ENCODE measurements at regions of chr10 and their contacts with region 1.

Region 1: DNA sequence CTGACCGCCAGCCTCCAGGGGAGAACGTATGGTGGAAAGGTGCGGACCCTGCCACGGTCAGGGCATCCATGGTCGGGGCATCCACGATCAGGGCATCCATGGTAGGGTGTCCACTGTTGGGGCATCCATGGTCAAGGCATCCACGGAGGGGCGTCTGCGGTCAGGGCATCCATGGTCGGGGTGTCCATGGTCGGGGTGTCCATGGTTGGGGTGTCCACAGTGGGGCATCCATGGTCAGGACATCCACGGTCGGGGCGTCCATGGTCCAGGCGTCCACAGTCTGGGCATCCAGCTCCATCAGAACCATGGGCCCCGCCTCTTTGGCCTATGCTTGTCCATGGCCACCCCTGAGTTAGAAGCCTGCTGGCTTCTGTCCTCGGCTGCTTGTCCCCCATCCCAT is 148.1 kb downstream of the ADARB2 start:
- DNase-seq: no peak
- ATAC-seq: no peak
- H3K4me3 ChIP-seq: no peak overlapping the region
- H3K27ac ChIP-seq: no peak overlapping the region
- H3K4me1 ChIP-seq: no peaks in the 10 kb centered on the region
- H3K27me3 ChIP-seq: peaks cover 0 to 12% (median 0%) of the 10 kb centered on the region in 7 donors
- CTCF ChIP-seq: no peak

Region 2: DNA sequence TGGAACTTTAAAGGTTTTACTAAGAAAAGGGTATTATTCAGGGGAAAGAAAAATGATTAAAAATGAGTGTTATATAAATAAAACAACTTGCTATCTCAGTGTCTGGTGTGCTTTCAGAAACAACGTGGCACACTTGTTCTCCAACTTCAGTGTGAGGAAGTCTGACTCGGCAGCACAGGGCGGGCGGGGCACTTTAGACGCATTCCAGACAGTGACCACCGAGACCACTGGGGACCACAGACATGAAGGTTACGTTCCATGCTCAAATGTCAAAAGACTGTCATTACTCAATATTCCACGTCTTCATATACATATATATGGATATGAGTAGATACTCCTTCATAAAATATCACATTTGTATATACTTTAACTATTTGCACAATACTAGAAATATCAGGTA is 744.7 kb before region 1 on chr10:
- intact Hi-C with region 1: loop called in 1 of 10 experiments (anchors 5 kb)
- DNase-seq: no peak
- ATAC-seq: peak in 2 of 8 donors; percentile 37 to 50
- H3K4me3 ChIP-seq: no peak overlapping the region
- H3K27ac ChIP-seq: no peak overlapping the region
- H3K4me1 ChIP-seq: peaks cover 0 to 41% (median 20%) of the 10 kb centered on the region in 9 donors
- H3K27me3 ChIP-seq: no peaks in the 10 kb centered on the region
- CTCF ChIP-seq: no peak

Region 3: GRCh38 chr10:1187151-1187854 is 402.0 kb before region 1 on chr10:
- intact Hi-C with region 1: no loop called
- DNase-seq: no peak
- ATAC-seq: no peak
- H3K4me3 ChIP-seq: no peak overlapping the region
- H3K27ac ChIP-seq: no peak overlapping the region
- H3K4me1 ChIP-seq: no peaks in the 10 kb centered on the region
- H3K27me3 ChIP-seq: peaks cover 0 to 51% (median 21%) of the 10 kb centered on the region in 7 donors
- CTCF ChIP-seq: no peak

Region 4: GRCh38 chr10:1661859-1662437 is 72.7 kb after region 1 on chr10:
- intact Hi-C with region 1: no loop called
- DNase-seq: no peak
- ATAC-seq: no peak
- H3K4me3 ChIP-seq: no peak overlapping the region
- H3K27ac ChIP-seq: no peak overlapping the region
- H3K4me1 ChIP-seq: no peaks in the 10 kb centered on the region
- H3K27me3 ChIP-seq: peaks cover 0 to 7% (median 0%) of the 10 kb centered on the region in 7 donors
- CTCF ChIP-seq: no peak